Dorsolateral prefrontal cortex (tissue), 120 donors: ENCODE measurements at regions of chr12 and their contacts with region 1.

Region 1: GRCh38 chr12:59372956-59373355 is 222.9 kb upstream of the SLC16A7 start:
- DNase-seq: peak in 1 of 10 donors; percentile 35
- H3K4me3 ChIP-seq: no peak overlapping the region
- H3K27ac ChIP-seq: peak overlapping the region in 2 of 59 donors; percentile 28 to 54
- H3K27me3 ChIP-seq: no peaks in the 10 kb centered on the region
- CTCF ChIP-seq: peak in 53 of 56 donors; percentile 19 to 76 (median 49)

Region 2: DNA sequence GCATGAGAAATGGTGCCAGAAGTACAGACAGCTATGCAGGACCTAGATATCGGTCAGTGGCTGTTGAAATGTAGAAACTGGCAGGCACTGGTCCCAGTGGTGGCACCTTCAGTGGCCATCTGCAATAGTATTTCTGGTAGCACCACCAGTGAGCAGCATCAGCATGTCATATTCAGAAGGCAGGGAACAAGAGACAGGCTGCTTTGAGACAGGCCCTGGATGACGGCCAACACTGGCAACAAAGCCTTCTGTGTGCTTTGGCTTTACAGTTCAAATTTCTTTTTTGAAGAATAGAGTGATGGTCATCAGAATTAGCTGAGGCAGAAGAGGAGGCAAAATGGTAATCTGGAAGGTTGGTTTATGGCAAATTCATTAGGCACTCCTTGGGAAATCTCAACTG is 50.5 kb before region 1 on chr12:
- intact Hi-C with region 1: loop called in 1 of 2 experiments (anchors 2 kb)
- DNase-seq: peak; percentile 26 to 93 (median 84)
- H3K4me3 ChIP-seq: peak overlapping the region in 25 of 59 donors; percentile 0 to 59 (median 16)
- H3K27ac ChIP-seq: peak overlapping the region in 58 of 59 donors; percentile 67 to 96 (median 89)
- H3K27me3 ChIP-seq: no peaks in the 10 kb centered on the region
- CTCF ChIP-seq: peak in 50 of 56 donors; percentile 9 to 65 (median 39)

Region 3: DNA sequence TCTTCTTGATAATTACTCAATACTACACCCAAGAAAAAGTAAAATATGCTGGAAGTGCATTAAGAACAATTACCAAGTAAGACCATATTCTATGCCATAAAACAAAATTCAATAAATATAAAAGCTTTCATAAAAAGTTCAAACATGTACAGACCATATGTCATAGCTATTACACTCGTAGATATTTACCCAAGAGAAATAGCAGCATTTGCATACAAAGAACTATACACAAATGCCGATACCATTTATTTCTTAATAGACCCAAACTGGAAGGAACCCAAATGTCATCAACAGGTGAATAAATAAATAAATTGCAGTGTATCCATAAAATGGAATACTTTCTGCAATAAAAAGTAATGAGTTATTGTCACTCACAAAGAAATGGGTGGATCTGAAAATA is 144.6 kb after region 1 on chr12:
- intact Hi-C with region 1: no loop called
- DNase-seq: no peak
- H3K4me3 ChIP-seq: no peak overlapping the region
- H3K27ac ChIP-seq: no peak overlapping the region
- H3K27me3 ChIP-seq: no peaks in the 10 kb centered on the region
- CTCF ChIP-seq: no peak